Stomach (tissue), 19 donors: ENCODE measurements at regions of chr2 and their contacts with region 1.

Region 1: DNA sequence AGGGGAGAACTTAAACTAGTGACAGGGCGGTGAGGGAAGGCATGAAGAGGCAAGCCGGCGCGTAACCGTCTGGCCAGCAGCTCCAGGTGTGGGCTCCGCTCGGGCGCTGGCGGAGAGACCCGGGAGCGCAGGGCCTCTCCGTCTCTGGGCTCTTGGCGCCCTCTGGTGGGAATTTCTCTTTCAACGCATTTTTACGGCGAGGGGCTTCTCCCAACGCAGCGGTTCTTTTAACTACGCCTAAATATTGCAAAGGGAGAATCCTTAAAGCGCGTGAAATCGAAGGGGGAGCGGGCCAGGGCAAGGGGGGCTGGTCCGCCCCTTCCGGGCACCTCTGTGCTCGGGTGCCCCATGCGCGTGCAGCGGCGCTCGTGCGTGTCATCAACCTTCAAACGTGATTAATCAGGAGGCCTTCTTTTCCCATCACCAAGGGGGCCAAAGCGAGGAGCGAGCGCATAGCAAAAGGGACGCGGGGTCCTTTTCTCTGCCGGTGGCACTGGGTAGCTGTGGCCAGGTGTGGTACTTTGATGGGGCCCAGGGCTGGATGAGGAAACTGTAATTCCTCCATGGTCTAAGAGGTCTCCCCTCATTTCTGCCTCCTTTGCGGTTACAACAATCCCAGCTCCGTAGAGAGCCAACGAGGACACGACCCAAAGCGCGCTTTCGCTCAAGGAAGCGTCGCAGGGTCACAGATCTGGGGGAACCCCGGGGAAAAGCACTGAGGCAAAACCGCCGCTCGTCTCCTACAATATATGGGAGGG is 762 bp upstream of the GAD1 start:
- DNase-seq: peak; percentile 72 to 90
- H3K4me3 ChIP-seq: peak overlapping the region; percentile 35 to 64 (median 44)
- H3K27ac ChIP-seq: no peak overlapping the region
- H3K4me1 ChIP-seq: peaks cover 54 to 73% (median 63%) of the 10 kb centered on the region in 4 donors
- H3K27me3 ChIP-seq: peaks cover 53 to 90% (median 81%) of the 10 kb centered on the region in 3 donors
- CTCF ChIP-seq: peak in 5 of 7 experiments; percentile 66 to 84 (median 73)
- EP300 ChIP-seq: no peak
- POLR2A ChIP-seq: no peak

Region 2: GRCh38 chr2:170361090-170361936 is 454.6 kb before region 1 on chr2:
- intact Hi-C with region 1: loop called (anchors 10 kb)
- DNase-seq: peak; percentile 53 to 80
- H3K4me3 ChIP-seq: no peak overlapping the region
- H3K27ac ChIP-seq: no peak overlapping the region
- H3K4me1 ChIP-seq: peaks cover 0 to 16% (median 3%) of the 10 kb centered on the region in 4 donors
- H3K27me3 ChIP-seq: peaks cover 0 to 40% (median 0%) of the 10 kb centered on the region in 3 donors
- CTCF ChIP-seq: peak in 5 of 7 experiments; percentile 37 to 54 (median 52)
- EP300 ChIP-seq: no peak
- POLR2A ChIP-seq: no peak

Region 3: DNA sequence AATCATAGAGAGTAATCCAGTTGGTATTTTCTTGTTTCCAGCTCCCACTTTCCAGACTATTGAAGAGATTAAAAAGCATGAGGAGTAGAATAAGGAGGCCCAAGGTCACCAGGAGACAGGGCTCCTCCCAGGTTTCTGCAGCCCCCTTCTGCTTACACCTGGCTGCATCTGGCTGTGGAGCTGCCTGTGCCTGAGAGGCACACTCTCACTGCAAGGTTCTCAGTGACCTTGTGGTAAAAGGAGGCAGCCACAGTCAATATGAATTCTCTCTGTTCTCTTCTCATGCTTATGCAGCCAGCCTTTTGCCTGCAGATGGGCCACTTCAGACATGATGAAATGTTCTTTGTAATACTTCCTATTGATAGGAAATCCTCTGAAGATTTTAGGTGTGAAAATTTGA is 404.3 kb before region 1 on chr2:
- intact Hi-C with region 1: loop called (anchors 5 kb)
- DNase-seq: peak in 1 of 2 donors; percentile 9
- H3K4me3 ChIP-seq: no peak overlapping the region
- H3K27ac ChIP-seq: no peak overlapping the region
- H3K4me1 ChIP-seq: peaks cover 0 to 13% (median 9%) of the 10 kb centered on the region in 4 donors
- H3K27me3 ChIP-seq: peaks cover 0 to 23% (median 0%) of the 10 kb centered on the region in 3 donors
- CTCF ChIP-seq: no peak
- EP300 ChIP-seq: no peak
- POLR2A ChIP-seq: no peak

Region 4: DNA sequence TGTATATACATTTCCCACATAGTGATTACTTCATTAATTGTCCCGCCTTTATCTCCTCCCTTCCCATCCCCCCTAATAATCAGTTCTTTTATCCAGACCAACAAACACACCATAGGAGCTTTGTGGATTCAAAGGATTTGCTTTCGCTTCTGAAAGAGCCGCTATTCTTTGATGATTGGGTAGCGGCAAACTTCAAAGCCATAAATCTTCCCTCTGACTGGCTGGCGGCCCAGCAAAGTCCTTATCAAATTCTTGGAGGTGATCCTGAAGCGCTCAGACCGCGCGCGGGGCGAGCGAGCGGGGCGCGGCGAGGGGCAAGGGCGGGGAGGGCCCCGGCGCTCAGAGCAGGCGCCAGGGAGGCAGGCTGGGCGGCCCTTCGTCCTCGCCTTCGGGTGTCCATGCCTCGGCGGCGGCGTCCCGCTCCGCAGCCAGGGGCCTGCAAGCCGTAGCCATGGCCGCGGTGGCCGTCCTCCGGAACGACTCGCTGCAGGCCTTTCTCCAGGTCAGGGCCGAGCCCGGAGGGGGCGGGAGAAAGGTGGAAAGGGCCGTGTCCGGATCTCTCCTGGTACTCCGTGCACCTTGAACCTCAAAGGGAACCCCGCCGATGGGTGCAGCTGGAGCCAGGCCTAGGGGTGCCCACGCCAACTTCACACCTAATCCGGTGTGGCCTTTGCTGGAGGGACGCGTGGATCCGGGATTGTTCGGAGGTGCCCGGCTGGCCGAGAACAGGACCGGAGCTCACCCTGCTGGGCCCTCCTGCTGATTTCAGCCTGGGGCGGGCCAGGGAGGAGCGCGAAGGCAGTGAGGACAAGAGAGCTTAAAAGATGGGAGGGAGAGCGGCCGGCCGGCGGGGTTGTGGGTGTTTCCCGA is 100.6 kb before region 1 on chr2 and contains the start of gene SP5:
- intact Hi-C with region 1: loop called (anchors 10 kb)
- DNase-seq: peak; percentile 86 to 88
- H3K4me3 ChIP-seq: peak within 1 kb of the TSS; percentile 52 to 67 (median 56)
- H3K27ac ChIP-seq: peak within 1 kb of the TSS; percentile 81 to 93 (median 83)
- H3K4me1 ChIP-seq: peaks cover 60 to 70% (median 65%) of the 10 kb centered on the region in 4 donors
- H3K27me3 ChIP-seq: peaks cover 6 to 98% (median 71%) of the 10 kb centered on the region in 3 donors
- CTCF ChIP-seq: no peak
- EP300 ChIP-seq: no peak
- POLR2A ChIP-seq: no peak
- total RNA-seq, gene SP5: 0.92 to 5.8 (median 1.2) TPM in 3 of 5 donors, not detected in the others

Region 5: DNA sequence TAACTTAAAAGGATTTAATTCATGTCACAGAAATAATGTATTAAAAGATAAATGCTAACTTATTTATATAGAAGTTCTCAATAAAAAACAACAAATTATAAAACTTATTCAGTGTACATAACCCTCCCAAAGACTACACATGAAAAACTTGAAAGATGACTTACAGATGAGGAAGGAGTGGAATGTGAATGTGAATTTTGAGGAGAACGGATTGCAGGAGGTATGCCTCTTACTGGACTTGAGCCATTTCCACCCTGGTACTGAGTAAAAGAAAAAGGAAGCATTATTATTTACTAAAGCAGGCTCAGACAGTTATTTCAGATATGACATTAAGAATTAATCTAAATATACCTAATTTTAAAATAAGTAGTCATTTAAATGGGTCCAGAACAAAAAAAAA is 240.4 kb after region 1 on chr2:
- intact Hi-C with region 1: no loop called
- DNase-seq: no peak
- H3K4me3 ChIP-seq: no peak overlapping the region
- H3K27ac ChIP-seq: no peak overlapping the region
- H3K4me1 ChIP-seq: peaks cover 0 to 23% (median 0%) of the 10 kb centered on the region in 4 donors
- H3K27me3 ChIP-seq: no peaks in the 10 kb centered on the region
- CTCF ChIP-seq: no peak
- EP300 ChIP-seq: no peak
- POLR2A ChIP-seq: no peak